Posterior cingulate gyrus (tissue), 11 donors: ENCODE measurements at regions of chr3 and their contacts with region 1.

Region 1: GRCh38 chr3:73848173-73848906 is 223.6 kb upstream of the PDZRN3 start:
- DNase-seq: no peak

Region 2: DNA sequence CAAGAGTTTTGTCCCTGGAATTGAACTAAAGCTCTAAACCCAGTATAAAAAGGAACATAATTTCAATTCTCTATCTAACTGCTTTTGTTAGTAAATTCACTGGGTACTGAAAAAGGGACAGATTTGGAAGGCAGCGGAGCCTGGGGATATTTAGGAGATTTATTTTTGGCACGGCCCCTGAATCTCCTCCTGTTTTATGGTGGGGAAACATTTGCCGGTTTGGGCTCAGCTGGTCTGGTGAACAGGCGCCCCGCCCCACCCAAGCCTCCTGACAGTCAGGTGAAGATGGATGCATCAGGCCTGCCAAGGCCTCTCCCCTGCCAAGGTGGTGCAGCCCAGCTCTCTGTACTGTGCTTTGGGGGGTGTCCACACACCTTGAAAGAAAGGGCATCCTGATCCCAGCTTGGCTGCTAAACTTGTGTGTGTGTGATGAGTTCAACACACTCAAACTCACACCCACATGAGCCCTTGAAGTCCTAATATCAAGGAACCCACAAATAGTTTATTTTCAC is 740.6 kb before region 1 on chr3:
- intact Hi-C with region 1: loop called (anchors 5 kb)
- DNase-seq: no peak

Region 3: GRCh38 chr3:73508330-73508954 is 339.9 kb before region 1 on chr3:
- intact Hi-C with region 1: loop called (anchors 2 kb)
- DNase-seq: peak in 4 of 10 donors; percentile 45 to 88 (median 53)

Region 4: GRCh38 chr3:73624821-73625665 is 223.3 kb before region 1 on chr3 and contains the start of gene PDZRN3:
- intact Hi-C with region 1: loop called (anchors 10 kb)
- DNase-seq: peak in 9 of 10 donors; percentile 31 to 88 (median 56)

Region 5: GRCh38 chr3:73759297-73759711 is 89.0 kb before region 1 on chr3:
- intact Hi-C with region 1: no loop called
- DNase-seq: no peak